ENCODE measurements at regions of chr2 and their contacts with region 1.

Region 1: DNA sequence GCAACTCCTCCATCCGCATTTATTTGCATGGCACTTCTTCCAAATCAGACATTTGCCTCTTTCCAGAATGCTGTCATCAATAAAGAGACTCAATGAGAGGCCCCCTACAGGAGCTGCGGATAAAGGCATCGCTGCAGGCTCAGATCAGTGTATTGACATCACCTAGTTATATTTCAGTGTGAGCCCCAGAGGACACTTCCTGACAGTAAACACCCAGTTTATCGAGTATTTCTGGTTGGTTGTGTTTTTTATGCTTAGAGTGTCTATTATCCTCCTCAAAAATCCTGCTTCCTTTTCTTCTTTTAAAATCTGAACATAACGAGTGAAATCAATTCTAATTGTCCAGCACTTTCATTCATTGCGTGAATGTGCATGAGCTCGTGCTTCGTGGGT is 38.8 kb downstream of the NRP2 start:
- DNase-seq: no peak
- ATAC-seq: no peak
- H3K4me3 ChIP-seq: no peak overlapping the region
- H3K4me3 Mint-ChIP-seq: no peak overlapping the region
- H3K27ac ChIP-seq: no peak overlapping the region
- H3K27ac Mint-ChIP-seq: peak overlapping the region; percentile 3
- H3K4me1 ChIP-seq: peaks cover 11 to 18% of the 10 kb centered on the region in 2 donors
- H3K4me1 Mint-ChIP-seq: peaks cover 18% of the 10 kb centered on the region
- H3K27me3 ChIP-seq: no peaks in the 10 kb centered on the region
- H3K27me3 Mint-ChIP-seq: no peaks in the 10 kb centered on the region
- CTCF ChIP-seq: peak; percentile 28

Region 2: GRCh38 chr2:205706769-205707381 is 14.2 kb before region 1 on chr2:
- CTCF ChIA-PET with region 1: interaction called, 13 read pairs
- POLR2A ChIA-PET with region 1: interaction called, 6 read pairs
- intact Hi-C with region 1: loop called (anchors 2 kb)
- DNase-seq: peak; percentile 86
- ATAC-seq: peak; percentile 95
- H3K4me3 ChIP-seq: peak overlapping the region in 3 of 5 experiments; percentile 25 to 41 (median 30)
- H3K4me3 Mint-ChIP-seq: peak overlapping the region; percentile 84
- H3K27ac ChIP-seq: peak overlapping the region; percentile 86 to 93
- H3K27ac Mint-ChIP-seq: peak overlapping the region; percentile 99
- H3K4me1 ChIP-seq: peaks cover 41 to 45% of the 10 kb centered on the region in 2 donors
- H3K4me1 Mint-ChIP-seq: peaks cover 61% of the 10 kb centered on the region
- H3K27me3 ChIP-seq: no peaks in the 10 kb centered on the region
- H3K27me3 Mint-ChIP-seq: no peaks in the 10 kb centered on the region
- CTCF ChIP-seq: no peak

Region 3: GRCh38 chr2:205746420-205746785 is 25.4 kb after region 1 on chr2:
- CTCF ChIA-PET with region 1: no interaction called
- POLR2A ChIA-PET with region 1: no interaction called
- intact Hi-C with region 1: no loop called
- DNase-seq: no peak
- ATAC-seq: no peak
- H3K4me3 ChIP-seq: no peak overlapping the region
- H3K4me3 Mint-ChIP-seq: no peak overlapping the region
- H3K27ac ChIP-seq: no peak overlapping the region
- H3K27ac Mint-ChIP-seq: no peak overlapping the region
- H3K4me1 ChIP-seq: no peaks in the 10 kb centered on the region
- H3K4me1 Mint-ChIP-seq: no peaks in the 10 kb centered on the region
- H3K27me3 ChIP-seq: no peaks in the 10 kb centered on the region
- H3K27me3 Mint-ChIP-seq: no peaks in the 10 kb centered on the region
- CTCF ChIP-seq: no peak

Region 4: DNA sequence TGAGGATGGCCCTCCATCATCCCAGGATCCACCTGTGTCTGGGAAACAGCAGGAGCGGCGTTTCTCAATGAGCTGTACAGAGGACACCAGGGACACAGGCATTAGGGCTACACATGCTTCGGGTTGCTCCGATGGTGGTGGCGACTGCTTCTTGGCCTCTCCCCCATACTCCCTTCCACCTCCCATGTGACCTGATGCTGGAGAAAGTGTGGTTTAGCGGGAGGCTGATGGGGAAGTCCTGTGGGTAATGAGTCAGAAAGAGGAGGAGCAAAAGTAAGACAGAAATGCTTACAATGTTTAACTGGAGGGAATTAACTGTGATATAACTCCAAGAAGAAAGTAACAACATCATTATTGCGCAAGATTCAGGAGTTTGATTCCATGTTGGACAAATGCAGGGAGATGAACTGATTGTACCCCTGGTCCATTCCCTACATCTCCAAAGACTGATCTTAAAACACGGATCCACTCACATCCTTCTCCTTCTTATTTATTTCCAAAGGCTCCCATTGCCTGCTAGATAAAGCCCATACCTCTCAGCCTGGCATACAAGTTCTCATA is 147.8 kb after region 1 on chr2:
- CTCF ChIA-PET with region 1: no interaction called
- POLR2A ChIA-PET with region 1: interaction called, 11 read pairs
- intact Hi-C with region 1: no loop called
- DNase-seq: no peak
- ATAC-seq: no peak
- H3K4me3 ChIP-seq: no peak overlapping the region
- H3K4me3 Mint-ChIP-seq: no peak overlapping the region
- H3K27ac ChIP-seq: no peak overlapping the region
- H3K27ac Mint-ChIP-seq: no peak overlapping the region
- H3K4me1 ChIP-seq: no peaks in the 10 kb centered on the region
- H3K4me1 Mint-ChIP-seq: no peaks in the 10 kb centered on the region
- H3K27me3 ChIP-seq: peaks cover 0 to 4% (median 1%) of the 10 kb centered on the region in 4 experiments
- H3K27me3 Mint-ChIP-seq: peaks cover 17% of the 10 kb centered on the region
- CTCF ChIP-seq: no peak